ENCODE measurements at regions of chr10 and their contacts with region 1.

Region 1: GRCh38 chr10:24360282-24361127 is 151.6 kb downstream of the KIAA1217 start:
- DNase-seq: peak; percentile 57 to 78
- ATAC-seq: peak; percentile 82 to 89
- H3K4me3 ChIP-seq: no peak overlapping the region
- H3K27ac ChIP-seq: peak overlapping the region; percentile 44 to 73 (median 62)
- H3K4me1 ChIP-seq: peaks cover 14 to 22% of the 10 kb centered on the region in 2 donors
- H3K27me3 ChIP-seq: no peaks in the 10 kb centered on the region
- CTCF ChIP-seq: peak; percentile 57 to 75 (median 72)
- POLR2A ChIP-seq: no peak

Region 2: GRCh38 chr10:24008164-24009091 is 352.1 kb before region 1 on chr10:
- in situ Hi-C with region 1: loop called in 1 of 4 experiments (anchors 25 kb)
- intact Hi-C with region 1: no loop called
- DNase-seq: peak in 1 of 2 donors; percentile 52
- ATAC-seq: peak; percentile 84 to 96
- H3K4me3 ChIP-seq: peak overlapping the region in 3 of 4 donors; percentile 1 to 32 (median 25)
- H3K27ac ChIP-seq: peak overlapping the region; percentile 62 to 83 (median 74)
- H3K4me1 ChIP-seq: peaks cover 16 to 19% of the 10 kb centered on the region in 2 donors
- H3K27me3 ChIP-seq: no peaks in the 10 kb centered on the region
- CTCF ChIP-seq: no peak
- POLR2A ChIP-seq: no peak

Region 3: DNA sequence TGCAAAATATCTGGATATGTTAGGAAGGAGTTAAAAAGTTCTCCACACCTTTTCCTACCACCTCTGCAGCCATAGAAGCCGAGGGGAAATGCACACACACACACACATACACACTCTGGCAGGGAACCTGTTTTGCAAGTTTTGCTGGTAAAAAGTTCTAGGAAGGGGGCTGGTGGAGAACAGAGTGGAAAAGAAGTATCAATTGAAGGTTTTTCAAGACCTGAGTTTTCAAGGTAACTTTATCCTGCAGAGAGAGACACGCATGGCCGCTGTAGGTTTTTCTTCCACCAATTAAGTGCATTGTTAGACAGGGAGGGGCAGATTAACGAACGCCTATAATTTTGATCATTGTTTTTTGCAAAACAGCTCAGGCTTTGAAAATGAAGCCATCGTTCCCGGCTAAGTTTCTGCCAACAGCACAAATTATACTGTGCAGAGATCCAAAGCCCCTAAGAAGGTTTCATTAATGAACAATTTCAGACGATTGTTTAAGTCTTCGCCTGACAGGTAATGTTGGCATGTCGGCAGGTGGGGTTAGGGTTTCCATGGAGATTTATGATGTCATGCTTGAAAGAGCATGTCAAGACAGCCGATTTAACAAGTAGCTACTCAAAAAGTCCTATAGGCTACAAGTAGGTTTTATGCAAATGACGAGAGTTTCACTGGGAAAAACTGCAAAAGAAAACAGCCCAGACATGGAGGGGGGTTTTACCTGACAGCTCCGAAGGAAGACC is 121.8 kb before region 1 on chr10:
- in situ Hi-C with region 1: loop called in 1 of 4 experiments (anchors 25 kb)
- intact Hi-C with region 1: no loop called
- DNase-seq: no peak
- ATAC-seq: no peak
- H3K4me3 ChIP-seq: no peak overlapping the region
- H3K27ac ChIP-seq: peak overlapping the region; percentile 58 to 78 (median 72)
- H3K4me1 ChIP-seq: peaks cover 78 to 80% of the 10 kb centered on the region in 2 donors
- H3K27me3 ChIP-seq: no peaks in the 10 kb centered on the region
- CTCF ChIP-seq: no peak
- POLR2A ChIP-seq: no peak

Region 4: GRCh38 chr10:24307696-24308485 is 52.6 kb before region 1 on chr10:
- in situ Hi-C with region 1: no loop called
- intact Hi-C with region 1: loop called (anchors 1 kb)
- DNase-seq: no peak
- ATAC-seq: no peak
- H3K4me3 ChIP-seq: no peak overlapping the region
- H3K27ac ChIP-seq: peak overlapping the region; percentile 88 to 96 (median 95)
- H3K4me1 ChIP-seq: peaks cover 74 to 77% of the 10 kb centered on the region in 2 donors
- H3K27me3 ChIP-seq: no peaks in the 10 kb centered on the region
- CTCF ChIP-seq: no peak
- POLR2A ChIP-seq: no peak

Region 5: GRCh38 chr10:24518981-24519597 is 158.6 kb after region 1 on chr10:
- in situ Hi-C with region 1: loop called in 2 of 4 experiments (anchors 10 to 25 kb)
- intact Hi-C with region 1: no loop called
- DNase-seq: peak; percentile 38 to 62
- ATAC-seq: peak; percentile 55 to 78
- H3K4me3 ChIP-seq: no peak overlapping the region
- H3K27ac ChIP-seq: peak overlapping the region; percentile 50 to 71 (median 66)
- H3K4me1 ChIP-seq: peaks cover 11 to 12% of the 10 kb centered on the region in 2 donors
- H3K27me3 ChIP-seq: no peaks in the 10 kb centered on the region
- CTCF ChIP-seq: peak; percentile 63 to 81 (median 78)
- POLR2A ChIP-seq: no peak